Calu3 (cell line): ENCODE measurements at regions of chr14 and their contacts with region 1.

Region 1: DNA sequence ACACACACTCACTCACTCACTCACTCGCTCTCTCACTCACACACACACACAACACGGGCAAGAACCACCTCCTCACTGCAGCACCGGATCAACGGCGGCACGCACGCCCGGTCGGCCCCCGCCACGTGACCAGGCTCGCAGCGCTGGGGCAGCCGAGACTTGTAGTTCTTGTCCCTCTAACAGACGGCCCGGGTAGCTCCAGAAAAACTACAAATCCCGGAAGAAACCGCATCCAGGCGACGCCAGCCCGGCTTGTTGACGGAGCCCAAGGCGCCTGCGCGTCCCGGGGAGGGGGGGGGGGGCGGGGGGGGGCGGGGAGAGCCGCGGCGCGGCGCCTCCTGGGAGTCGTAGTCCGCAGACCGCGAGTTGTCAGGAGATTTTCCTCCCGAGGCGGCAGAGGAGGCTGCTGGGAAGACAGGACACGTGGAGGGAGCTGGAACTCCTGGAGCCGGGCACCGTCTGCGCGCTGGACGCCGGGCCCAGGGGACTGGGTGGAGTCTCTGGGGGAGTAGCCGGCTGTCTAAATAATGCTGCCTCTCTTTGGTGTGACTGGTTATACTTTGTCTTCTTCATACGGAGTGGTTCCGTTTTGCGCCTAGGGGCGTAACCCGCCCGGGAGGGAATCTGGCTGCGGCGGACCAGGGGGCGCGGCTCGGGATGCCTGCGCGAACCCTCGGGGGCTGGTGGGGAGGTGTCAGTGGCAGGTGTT is at the start of gene MAX:
- DNase-seq: peak; percentile 96
- H3K4me3 Mint-ChIP-seq: peak within 1 kb of the TSS; percentile 98
- H3K27ac Mint-ChIP-seq: peak within 1 kb of the TSS; percentile 95
- H3K4me1 Mint-ChIP-seq: peaks cover 20% of the 10 kb centered on the region
- H3K27me3 Mint-ChIP-seq: no peaks in the 10 kb centered on the region
- CTCF ChIP-seq: no peak
- total RNA-seq, gene MAX: 83.6 and 85.2 TPM in 2 replicates

Region 2: GRCh38 chr14:65062096-65063077 is 40.2 kb before region 1 on chr14:
- CTCF ChIA-PET with region 1: no interaction called
- intact Hi-C with region 1: no loop called
- DNase-seq: no peak
- H3K4me3 Mint-ChIP-seq: no peak overlapping the region
- H3K27ac Mint-ChIP-seq: no peak overlapping the region
- H3K4me1 Mint-ChIP-seq: no peaks in the 10 kb centered on the region
- H3K27me3 Mint-ChIP-seq: no peaks in the 10 kb centered on the region
- CTCF ChIP-seq: no peak

Region 3: GRCh38 chr14:65153101-65153500 is 50.5 kb after region 1 on chr14:
- CTCF ChIA-PET with region 1: no interaction called
- intact Hi-C with region 1: loop called (anchors 5 kb)
- DNase-seq: no peak
- H3K4me3 Mint-ChIP-seq: no peak overlapping the region
- H3K27ac Mint-ChIP-seq: no peak overlapping the region
- H3K4me1 Mint-ChIP-seq: peaks cover 18% of the 10 kb centered on the region
- H3K27me3 Mint-ChIP-seq: no peaks in the 10 kb centered on the region
- CTCF ChIP-seq: no peak